ENCODE measurements at regions of chr2 and their contacts with region 1.

Region 1: GRCh38 chr2:229910832-229911412 is 10.9 kb downstream of the TRIP12 start:
- DNase-seq: no peak
- H3K4me3 Mint-ChIP-seq: no peak overlapping the region
- H3K27ac Mint-ChIP-seq: peak overlapping the region; percentile 62
- H3K4me1 Mint-ChIP-seq: peaks cover 37% of the 10 kb centered on the region
- H3K27me3 Mint-ChIP-seq: no peaks in the 10 kb centered on the region

Region 2: GRCh38 chr2:229642371-229642770 is 268.6 kb before region 1 on chr2:
- intact Hi-C with region 1: no loop called
- DNase-seq: no peak
- H3K4me3 Mint-ChIP-seq: no peak overlapping the region
- H3K27ac Mint-ChIP-seq: no peak overlapping the region
- H3K4me1 Mint-ChIP-seq: no peaks in the 10 kb centered on the region
- H3K27me3 Mint-ChIP-seq: peaks cover 5% of the 10 kb centered on the region

Region 3: DNA sequence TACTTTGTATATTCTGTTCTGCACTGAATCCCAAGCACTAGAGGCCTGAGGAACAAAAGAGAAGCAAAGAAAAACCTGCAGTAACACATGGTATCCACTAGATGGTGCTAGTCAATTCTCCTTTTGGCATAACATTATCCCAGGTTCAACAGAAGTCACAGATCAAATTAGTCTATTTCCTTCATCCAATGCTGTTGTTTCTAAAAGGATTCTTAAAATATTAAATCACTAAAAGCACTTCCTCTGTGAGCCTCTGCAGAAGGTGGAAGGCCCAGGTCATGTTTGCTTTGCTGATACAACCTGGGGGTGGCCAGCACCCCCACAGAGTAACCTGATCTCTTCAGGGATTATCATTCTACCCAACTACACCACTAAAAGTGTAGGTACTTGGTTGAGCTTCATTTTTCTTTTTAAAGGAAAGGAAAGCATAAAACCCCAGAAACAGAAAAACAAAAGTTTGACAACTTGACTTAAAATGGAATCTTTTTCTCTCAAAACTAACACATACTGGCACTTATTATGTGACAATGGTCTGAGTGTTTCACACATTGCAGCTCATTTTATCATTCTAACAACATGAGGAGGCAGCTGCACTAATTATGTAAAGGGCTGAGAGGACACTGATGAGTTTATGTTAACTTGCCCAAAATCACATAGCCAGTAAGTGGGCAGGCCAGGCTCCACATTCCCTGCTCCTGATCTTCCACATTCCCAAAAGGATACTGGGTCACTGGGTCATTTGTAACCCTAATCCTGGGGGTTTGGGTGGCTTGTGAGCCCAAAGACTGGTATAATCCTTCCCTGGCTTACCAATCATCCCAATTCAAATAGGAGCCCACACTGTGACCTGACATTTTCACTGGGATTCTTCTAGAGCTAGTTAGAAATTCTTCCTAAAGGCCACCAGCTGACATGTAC is 129.8 kb before region 1 on chr2:
- intact Hi-C with region 1: loop called (anchors 5 kb)
- DNase-seq: no peak
- H3K4me3 Mint-ChIP-seq: no peak overlapping the region
- H3K27ac Mint-ChIP-seq: no peak overlapping the region
- H3K4me1 Mint-ChIP-seq: peaks cover 26% of the 10 kb centered on the region
- H3K27me3 Mint-ChIP-seq: no peaks in the 10 kb centered on the region

Region 4: DNA sequence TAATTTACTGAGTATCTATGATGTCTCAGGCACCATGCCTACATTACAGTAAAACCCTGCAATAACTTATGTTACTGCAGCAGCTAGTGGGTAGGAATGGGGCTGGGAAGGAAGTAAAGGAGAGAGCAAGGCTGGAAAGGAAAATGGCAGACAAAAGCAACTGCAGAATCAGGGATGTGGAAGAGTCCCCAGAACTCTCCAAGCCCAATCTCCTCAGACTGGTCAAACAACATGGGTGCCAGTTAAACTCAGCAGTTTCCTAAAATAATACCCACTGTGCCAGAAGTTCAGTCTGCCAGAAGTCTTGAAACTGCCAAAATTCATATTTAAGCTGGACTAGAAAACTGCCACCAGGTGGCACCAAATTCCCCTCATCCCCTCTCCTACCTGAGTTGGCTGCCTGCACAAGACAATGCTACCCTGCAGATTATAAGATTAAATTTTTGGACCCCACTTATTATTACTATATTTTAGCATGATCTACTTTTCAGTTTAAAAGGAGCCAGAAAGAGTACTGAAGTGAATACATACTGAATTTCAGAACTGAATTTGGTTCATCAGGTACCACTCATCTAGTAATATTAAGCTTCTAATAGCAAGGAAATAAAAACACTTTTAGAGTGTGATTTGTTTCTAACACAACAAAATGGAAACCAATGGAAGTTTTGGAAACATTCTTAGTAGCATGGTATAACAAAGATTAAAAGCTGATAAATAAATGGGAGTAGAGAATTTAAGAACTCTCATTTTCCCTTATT is 109.7 kb before region 1 on chr2:
- intact Hi-C with region 1: loop called (anchors 2 kb)
- DNase-seq: peak; percentile 45
- H3K4me3 Mint-ChIP-seq: no peak overlapping the region
- H3K27ac Mint-ChIP-seq: no peak overlapping the region
- H3K4me1 Mint-ChIP-seq: no peaks in the 10 kb centered on the region
- H3K27me3 Mint-ChIP-seq: no peaks in the 10 kb centered on the region

Region 5: GRCh38 chr2:229921892-229922445 is 11.0 kb after region 1 on chr2 and contains the start of gene TRIP12:
- intact Hi-C with region 1: loop called (anchors 1 kb)
- DNase-seq: peak; percentile 89
- H3K4me3 Mint-ChIP-seq: peak within 1 kb of the TSS; percentile 100
- H3K27ac Mint-ChIP-seq: peak within 1 kb of the TSS; percentile 98
- H3K4me1 Mint-ChIP-seq: peaks cover 31% of the 10 kb centered on the region
- H3K27me3 Mint-ChIP-seq: no peaks in the 10 kb centered on the region
- total RNA-seq, gene TRIP12: 256 and 269 TPM in 2 replicates

Region 6: GRCh38 chr2:230018153-230018552 is 107.2 kb after region 1 on chr2:
- intact Hi-C with region 1: no loop called
- DNase-seq: no peak
- H3K4me3 Mint-ChIP-seq: no peak overlapping the region
- H3K27ac Mint-ChIP-seq: no peak overlapping the region
- H3K4me1 Mint-ChIP-seq: no peaks in the 10 kb centered on the region
- H3K27me3 Mint-ChIP-seq: peaks cover 6% of the 10 kb centered on the region

Measured in activated T-helper 2 cell treated with anti-CD3 and anti-CD28 coated beads, Interferon-gamma antibody, Interleukin-2, Interleukin-4, amounts not matched to agents 10 μg/mL and 5 μg/mL and 100 μg/mL, durations not matched to agents 14 hours and 24 hours and 36 hours (primary cell).